ENCODE measurements at regions of chr12 and their contacts with region 1.

Region 1: GRCh38 chr12:96194971-96195844 is 1.0 kb downstream of the ELK3 start:
- DNase-seq: peak; percentile 91
- H3K4me3 Mint-ChIP-seq: peak overlapping the region; percentile 99
- H3K27ac Mint-ChIP-seq: peak overlapping the region; percentile 100
- H3K4me1 Mint-ChIP-seq: peaks cover 54% of the 10 kb centered on the region
- H3K27me3 Mint-ChIP-seq: no peaks in the 10 kb centered on the region

Region 2: DNA sequence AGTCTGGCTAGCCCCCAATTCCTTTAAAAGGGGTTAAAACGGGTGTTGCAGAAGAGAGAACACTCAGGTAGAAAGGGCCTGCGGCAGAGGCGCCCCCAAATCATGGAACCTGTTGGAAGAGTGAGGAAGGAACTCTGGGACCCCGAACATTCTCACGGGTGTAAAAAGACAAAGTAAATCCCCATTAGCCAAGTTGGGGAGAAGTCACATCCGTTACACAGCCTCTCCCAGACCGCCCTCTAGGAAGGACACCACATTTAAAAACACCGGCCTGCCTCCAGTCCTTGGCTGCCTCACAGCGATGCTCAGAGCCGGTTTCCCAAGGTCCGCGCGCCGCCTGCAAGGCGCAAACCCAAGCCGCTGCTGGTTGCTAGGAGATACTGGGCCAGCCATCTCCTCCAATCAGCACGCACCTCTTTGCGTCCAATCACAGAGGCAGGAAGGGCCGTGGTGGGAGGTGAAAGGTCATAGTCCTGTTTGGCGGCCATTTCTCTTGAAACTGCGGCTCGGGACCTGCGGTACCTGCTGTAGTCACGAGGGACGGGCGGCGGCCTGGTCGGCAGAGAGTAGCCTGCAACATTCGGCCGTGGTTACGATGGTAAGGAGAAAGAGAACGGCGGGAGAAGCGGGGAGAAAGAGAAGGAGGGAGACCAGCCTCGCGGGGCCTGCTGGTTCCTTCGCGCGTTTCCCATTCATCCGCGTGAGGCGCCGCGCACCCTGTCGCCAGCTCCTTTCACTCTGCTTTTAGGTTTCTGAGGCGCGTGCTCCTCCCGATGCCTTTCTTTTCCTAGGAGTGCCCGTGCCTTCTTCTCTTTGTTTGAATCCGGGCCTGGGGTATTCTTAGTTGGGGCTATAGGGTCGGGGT is 336.5 kb before region 1 on chr12 and contains the start of gene SNRPF:
- CTCF ChIA-PET with region 1: interaction called, 4 read pairs
- intact Hi-C with region 1: loop called (anchors 5 kb)
- DNase-seq: peak; percentile 97
- H3K4me3 Mint-ChIP-seq: no peak within 1 kb of the TSS
- H3K27ac Mint-ChIP-seq: no peak within 1 kb of the TSS
- H3K4me1 Mint-ChIP-seq: peaks cover 25% of the 10 kb centered on the region
- H3K27me3 Mint-ChIP-seq: peaks cover 3% of the 10 kb centered on the region
- total RNA-seq, gene SNRPF: 57.4 to 59.9 TPM

Region 3: GRCh38 chr12:96061864-96062453 is 133.2 kb before region 1 on chr12:
- CTCF ChIA-PET with region 1: interaction called, 6 read pairs
- intact Hi-C with region 1: loop called (anchors 5 kb)
- DNase-seq: peak; percentile 90
- H3K4me3 Mint-ChIP-seq: no peak overlapping the region
- H3K27ac Mint-ChIP-seq: no peak overlapping the region
- H3K4me1 Mint-ChIP-seq: peaks cover 25% of the 10 kb centered on the region
- H3K27me3 Mint-ChIP-seq: no peaks in the 10 kb centered on the region

Region 4: GRCh38 chr12:96237465-96238077 is 42.4 kb after region 1 on chr12:
- CTCF ChIA-PET with region 1: no interaction called
- intact Hi-C with region 1: loop called (anchors 2 kb)
- DNase-seq: peak; percentile 75
- H3K4me3 Mint-ChIP-seq: no peak overlapping the region
- H3K27ac Mint-ChIP-seq: peak overlapping the region; percentile 47
- H3K4me1 Mint-ChIP-seq: peaks cover 66% of the 10 kb centered on the region
- H3K27me3 Mint-ChIP-seq: no peaks in the 10 kb centered on the region

Region 5: DNA sequence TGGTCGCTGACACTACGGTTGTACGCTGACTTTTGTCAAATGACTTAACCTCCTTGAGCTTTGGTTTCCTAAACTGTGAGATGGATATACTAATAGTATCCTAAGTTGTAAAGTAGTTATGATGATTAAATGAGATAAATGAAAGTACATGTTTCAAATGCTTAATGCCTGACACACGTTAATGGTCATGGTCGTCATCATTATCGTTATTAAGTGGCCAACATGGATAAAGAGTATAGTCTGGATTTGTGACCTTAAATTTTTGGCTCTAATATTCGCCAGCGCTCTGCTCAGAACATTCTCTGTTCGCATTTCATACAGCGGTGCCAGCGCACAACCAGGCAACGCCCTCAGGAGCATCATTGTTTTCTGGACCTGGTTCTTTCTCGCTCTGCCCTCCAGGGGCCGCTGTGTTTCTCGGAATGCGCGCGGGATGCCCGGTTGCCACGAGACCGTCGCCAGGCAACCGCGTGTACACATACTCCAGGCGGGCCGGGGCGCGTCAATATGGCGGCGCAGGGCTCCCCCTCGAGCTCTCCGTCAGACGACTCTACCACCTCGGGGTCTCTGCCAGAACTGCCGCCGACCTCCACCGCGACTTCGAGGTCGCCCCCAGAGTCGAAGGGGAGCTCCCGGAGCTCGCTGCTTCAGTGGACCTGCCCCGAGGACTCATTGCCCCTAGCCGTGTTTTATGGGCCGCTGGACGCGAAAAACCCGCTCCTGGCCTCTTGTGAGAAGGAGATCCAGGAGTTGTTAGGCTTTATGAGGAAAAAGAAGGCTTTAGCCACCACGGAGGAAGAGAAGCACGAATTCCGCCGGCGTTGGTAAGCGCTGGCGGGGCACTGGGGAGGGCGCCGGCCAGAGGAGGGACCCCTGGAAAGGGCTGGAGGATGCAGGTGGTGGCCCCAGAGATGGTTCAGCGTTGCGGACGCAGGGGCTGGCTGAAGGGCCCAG is 294.2 kb after region 1 on chr12 and contains the start of gene CFAP54:
- CTCF ChIA-PET with region 1: no interaction called
- intact Hi-C with region 1: loop called (anchors 1 kb)
- DNase-seq: peak; percentile 96
- H3K4me3 Mint-ChIP-seq: peak within 1 kb of the TSS; percentile 85
- H3K27ac Mint-ChIP-seq: no peak within 1 kb of the TSS
- H3K4me1 Mint-ChIP-seq: peaks cover 24% of the 10 kb centered on the region
- H3K27me3 Mint-ChIP-seq: no peaks in the 10 kb centered on the region
- total RNA-seq, gene CFAP54: 0.38 to 0.64 TPM

Measured in activated naive CD4-positive, alpha-beta T cell treated with anti-CD3 and anti-CD28 coated beads for 36 hours (primary cell).